IMR-90 (cell line): ENCODE measurements at regions of chr11 and their contacts with region 1.

Region 1: DNA sequence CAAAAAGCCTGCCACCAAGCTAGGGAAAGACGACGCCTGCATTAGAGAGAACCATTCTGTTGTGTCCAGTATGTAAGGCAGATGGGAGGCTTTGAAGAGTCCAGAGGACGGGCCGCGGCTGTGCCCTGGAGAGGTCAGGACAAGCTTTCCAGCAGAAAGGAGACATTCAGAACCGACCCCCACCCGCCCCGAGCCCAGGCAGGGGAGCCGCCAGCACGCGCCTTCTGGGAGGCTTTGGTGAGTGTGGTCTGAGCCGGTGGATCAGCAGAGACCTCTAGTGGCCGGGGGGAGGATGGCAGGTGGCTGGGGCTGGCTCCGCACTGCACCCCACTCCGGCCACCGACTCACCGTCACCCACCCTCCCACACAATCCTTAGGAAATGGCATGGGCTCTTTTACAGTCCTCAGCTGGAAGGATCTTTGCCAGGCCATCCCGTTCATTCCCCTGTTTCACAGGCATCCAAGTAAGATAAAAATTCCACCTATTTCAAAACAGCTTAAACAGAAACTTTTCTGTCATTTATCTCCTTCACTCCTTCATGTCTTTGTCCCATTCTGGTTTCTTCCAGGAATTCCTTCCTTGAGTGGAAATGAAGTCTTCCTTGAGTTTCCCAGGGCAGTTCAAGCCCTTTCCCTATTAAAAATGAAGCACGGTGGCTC is 91.2 kb downstream of the FEZ1 start:
- DNase-seq: peak; percentile 47
- ATAC-seq: peak; percentile 96
- H3K4me3 ChIP-seq: no peak overlapping the region
- H3K27ac ChIP-seq: no peak overlapping the region
- H3K4me1 ChIP-seq: peaks cover 6% of the 10 kb centered on the region; the same call in 1 of the 2 replicates
- H3K27me3 ChIP-seq: peaks cover 16% of the 10 kb centered on the region
- CTCF ChIP-seq: peak; percentile 95
- POLR2A ChIP-seq: peak; percentile 43; the same call in 1 of the 2 replicates
- RAD21 ChIP-seq: peak; percentile 92

Region 2: DNA sequence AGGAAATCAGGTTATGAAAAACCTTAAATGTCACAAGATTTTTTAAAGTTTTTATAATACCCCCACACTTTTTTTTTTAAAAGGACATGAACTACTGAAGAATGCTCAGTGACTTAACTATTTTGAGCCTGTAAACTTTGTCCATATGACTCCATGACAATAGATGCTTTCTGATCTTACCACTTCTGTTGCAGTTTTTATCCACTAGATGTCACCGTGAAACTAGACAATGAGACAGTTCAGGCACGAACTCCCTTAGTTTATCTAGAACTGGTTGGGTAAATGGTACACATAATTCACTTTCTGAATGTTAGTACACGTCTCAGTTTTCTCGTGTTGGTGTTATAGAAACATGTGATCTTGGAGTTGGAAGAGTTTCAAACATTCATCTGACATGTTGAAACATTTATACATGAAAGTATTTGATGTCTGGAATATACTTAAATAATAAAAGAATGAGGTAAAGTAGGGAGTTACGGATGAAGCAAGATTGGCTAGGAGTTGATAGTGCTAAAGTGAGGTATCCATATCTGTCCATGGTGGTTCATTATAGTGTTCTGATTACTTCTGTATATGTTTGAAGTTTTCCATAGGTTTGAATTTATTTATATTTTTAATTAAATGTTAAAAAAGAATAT is 442.8 kb before region 1 on chr11:
- CTCF ChIA-PET with region 1: no interaction called
- POLR2A ChIA-PET with region 1: interaction called, 4 read pairs
- dilution Hi-C with region 1: no loop called
- in situ Hi-C with region 1: loop called (anchors 10 kb)
- intact Hi-C with region 1: loop called (anchors 1 kb)
- DNase-seq: peak; percentile 85
- ATAC-seq: peak; percentile 100
- H3K4me3 ChIP-seq: no peak overlapping the region
- H3K27ac ChIP-seq: no peak overlapping the region
- H3K4me1 ChIP-seq: no peaks in the 10 kb centered on the region
- H3K27me3 ChIP-seq: no peaks in the 10 kb centered on the region
- CTCF ChIP-seq: peak; percentile 91
- POLR2A ChIP-seq: peak; percentile 43; the same call in 1 of the 2 replicates
- RAD21 ChIP-seq: peak; percentile 95

Region 3: DNA sequence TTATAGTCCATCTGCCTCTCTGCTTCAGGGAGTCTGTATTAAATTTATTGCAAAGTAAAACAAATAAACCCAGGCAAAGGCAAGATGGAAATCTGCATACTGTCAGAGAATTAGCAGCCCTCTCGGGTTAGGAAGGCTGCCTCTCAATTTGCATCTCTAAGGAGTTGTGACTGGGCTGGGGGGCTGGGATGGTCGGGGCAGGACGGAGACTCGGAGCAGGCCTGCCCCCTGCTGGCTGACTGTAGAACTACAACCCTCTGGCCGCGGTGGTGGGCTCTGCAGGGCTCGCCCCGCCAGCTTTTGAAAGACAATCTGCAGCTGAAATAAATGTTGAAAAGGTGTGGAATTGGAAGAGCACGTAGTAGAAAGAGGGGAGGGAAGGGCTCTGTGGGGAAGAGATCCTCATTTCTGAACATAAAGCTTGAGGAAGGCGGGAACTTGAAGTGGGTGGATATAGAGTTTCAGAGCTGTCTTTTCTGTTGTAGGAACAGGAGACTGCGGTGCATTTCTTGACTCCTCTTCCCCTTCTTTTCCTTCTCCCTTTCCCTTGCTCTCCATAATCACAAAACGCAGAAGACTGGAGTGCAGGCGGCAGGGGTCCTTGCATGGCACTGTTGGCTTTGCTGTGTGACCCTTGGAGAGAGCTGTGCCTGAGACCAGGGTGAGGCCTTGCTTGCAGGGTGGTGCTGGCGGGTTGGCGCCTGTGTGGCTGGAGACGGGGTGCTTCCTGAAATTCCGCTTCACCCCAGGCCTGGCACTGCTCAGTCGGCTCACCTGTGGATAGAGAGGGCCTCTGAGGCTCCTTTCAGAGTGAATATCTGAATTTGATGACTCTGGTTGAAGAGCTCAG is 263.0 kb before region 1 on chr11:
- CTCF ChIA-PET with region 1: interaction called, 6 read pairs
- POLR2A ChIA-PET with region 1: no interaction called
- dilution Hi-C with region 1: no loop called
- in situ Hi-C with region 1: no loop called
- intact Hi-C with region 1: loop called (anchors 5 kb)
- DNase-seq: peak; percentile 29
- ATAC-seq: peak; percentile 100
- H3K4me3 ChIP-seq: no peak overlapping the region
- H3K27ac ChIP-seq: no peak overlapping the region
- H3K4me1 ChIP-seq: no peaks in the 10 kb centered on the region; the same call in 1 of the 2 replicates
- H3K27me3 ChIP-seq: peaks cover 13% of the 10 kb centered on the region
- CTCF ChIP-seq: peak; percentile 83
- POLR2A ChIP-seq: 0 out of 2 replicates have a peak, but pooled peaks have one; percentile 29
- RAD21 ChIP-seq: peak; percentile 82

Region 4: DNA sequence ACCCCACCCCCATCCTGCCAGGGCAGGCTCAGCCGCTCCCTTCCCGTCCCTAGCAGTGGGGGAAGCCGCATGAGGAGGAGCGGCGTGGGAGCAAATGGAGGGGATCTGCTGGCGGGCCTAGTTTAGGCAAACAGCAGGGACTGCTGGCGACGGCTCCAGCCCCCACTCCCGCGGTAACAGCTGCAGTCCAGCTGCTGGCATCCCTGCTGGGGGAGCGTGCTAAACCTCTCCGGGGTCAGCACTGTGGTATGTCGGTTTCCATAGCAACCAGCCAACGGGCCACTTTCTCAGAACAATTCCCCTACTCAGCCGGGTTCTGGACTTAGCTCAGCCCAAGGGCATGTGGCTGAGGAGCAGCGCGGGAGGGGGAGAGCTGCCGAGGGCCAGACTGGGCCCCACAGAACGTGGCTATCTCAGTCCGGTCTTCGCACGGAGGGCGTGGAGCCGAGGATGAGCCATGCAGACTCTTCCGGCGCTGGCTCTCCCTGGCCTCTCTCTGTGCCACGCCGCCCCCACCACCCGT is 141.6 kb before region 1 on chr11:
- CTCF ChIA-PET with region 1: interaction called, 3 read pairs
- POLR2A ChIA-PET with region 1: no interaction called
- dilution Hi-C with region 1: no loop called
- in situ Hi-C with region 1: no loop called
- intact Hi-C with region 1: loop called (anchors 10 kb)
- DNase-seq: peak; percentile 100
- ATAC-seq: peak; percentile 93
- H3K4me3 ChIP-seq: no peak overlapping the region
- H3K27ac ChIP-seq: peak overlapping the region; percentile 93
- H3K4me1 ChIP-seq: peaks cover 32% of the 10 kb centered on the region
- H3K27me3 ChIP-seq: no peaks in the 10 kb centered on the region
- CTCF ChIP-seq: no peak
- POLR2A ChIP-seq: peak; percentile 48; the same call in 1 of the 2 replicates
- RAD21 ChIP-seq: peak; percentile 10